ENCODE measurements at regions of chr2 and their contacts with region 1.

Region 1: DNA sequence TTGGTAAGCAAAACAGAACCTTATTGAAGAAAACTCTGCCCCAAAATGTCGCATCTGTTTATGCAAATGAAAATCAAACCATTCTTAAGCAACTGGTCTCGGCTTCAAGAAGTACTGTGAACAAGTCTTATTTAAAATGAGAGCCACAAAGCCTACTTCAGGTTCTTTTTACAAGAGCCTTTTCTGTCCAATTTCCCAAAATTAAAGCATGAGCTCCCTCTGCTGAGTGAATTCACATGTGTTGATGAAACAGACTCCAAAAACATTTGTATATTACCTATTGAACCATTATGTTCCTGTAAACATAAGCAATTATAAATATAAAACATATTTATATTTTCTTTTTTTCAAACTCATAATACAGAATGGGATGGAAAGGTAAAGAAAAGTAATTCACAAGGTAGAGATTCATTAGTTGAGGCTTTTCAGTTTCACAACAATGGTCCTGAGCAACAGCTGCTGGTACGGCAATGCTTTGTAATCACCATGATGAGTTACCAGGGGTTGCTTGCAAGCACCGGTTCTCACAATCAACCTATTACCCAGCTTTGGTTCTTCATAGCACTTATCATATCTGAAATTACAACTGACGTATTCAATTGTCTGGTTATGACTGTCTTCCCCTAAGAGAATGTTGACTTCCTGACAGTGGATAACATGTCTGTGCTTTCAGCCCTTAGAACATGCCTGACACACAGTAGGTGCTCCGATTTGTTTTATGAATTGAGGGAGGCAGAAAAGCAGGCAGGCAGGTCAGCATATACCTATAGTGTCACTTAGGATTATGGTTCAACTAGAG is 108.4 kb upstream of the BZW1 start:
- DNase-seq: peak; percentile 92
- ATAC-seq: peak; percentile 84
- H3K4me3 ChIP-seq: peak overlapping the region; percentile 33; the same call in 1 of the 2 replicates
- H3K27ac ChIP-seq: no peak overlapping the region
- H3K4me1 ChIP-seq: peaks cover 18% of the 10 kb centered on the region
- H3K27me3 ChIP-seq: no peaks in the 10 kb centered on the region
- CTCF ChIP-seq: peak; percentile 84

Region 2: GRCh38 chr2:199973703-199974102 is 729.6 kb before region 1 on chr2:
- CTCF ChIA-PET with region 1: no interaction called
- POLR2A ChIA-PET with region 1: no interaction called
- intact Hi-C with region 1: loop called (anchors 1 kb)
- DNase-seq: peak; percentile 50
- ATAC-seq: peak; percentile 39
- H3K4me3 ChIP-seq: no peak overlapping the region
- H3K27ac ChIP-seq: no peak overlapping the region
- H3K4me1 ChIP-seq: peaks cover 15% of the 10 kb centered on the region
- H3K27me3 ChIP-seq: no peaks in the 10 kb centered on the region
- CTCF ChIP-seq: peak; percentile 82

Region 3: DNA sequence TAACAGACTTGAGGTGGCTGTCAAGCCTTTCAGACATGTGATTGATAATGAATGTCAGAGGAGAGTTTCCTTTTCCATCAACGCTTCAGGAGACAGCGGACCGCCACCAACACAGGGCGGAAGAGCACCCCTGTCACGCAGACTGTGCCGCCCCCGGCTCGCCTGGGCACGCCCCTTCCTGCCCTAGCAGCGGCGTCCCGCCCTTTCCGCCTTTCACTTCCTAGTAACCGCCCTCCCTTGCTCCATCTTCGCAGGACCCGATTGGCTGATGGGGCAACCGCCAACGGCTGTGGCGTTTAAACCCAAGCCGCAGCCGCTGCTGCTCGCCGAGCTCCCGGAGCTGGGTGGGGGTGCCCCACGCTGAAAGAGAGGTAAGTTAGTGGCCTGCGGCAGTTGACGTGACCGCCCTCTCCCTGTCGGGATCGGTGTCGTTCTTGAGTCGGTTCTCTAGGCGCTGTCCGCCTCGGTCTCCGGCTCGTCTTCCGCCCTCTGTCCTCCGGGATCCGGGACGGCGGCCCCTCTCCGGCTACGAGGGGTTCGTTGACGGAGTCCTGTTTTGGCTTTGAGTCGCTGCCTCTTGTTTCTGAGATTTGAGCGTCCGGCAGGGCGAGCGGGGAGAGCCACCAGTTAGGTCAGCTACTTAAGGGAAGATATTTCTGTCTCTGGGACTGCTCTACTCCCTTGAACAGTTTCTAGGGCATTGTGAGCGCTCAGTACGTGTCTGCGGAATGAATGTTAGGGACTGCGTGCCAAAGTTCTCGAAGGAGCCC is 177.3 kb before region 1 on chr2 and contains the start of gene SGO2:
- CTCF ChIA-PET with region 1: no interaction called
- POLR2A ChIA-PET with region 1: no interaction called
- intact Hi-C with region 1: loop called (anchors 5 kb)
- DNase-seq: peak; percentile 98
- ATAC-seq: peak; percentile 90
- H3K4me3 ChIP-seq: peak within 1 kb of the TSS; percentile 92
- H3K27ac ChIP-seq: peak within 1 kb of the TSS; percentile 57
- H3K4me1 ChIP-seq: peaks cover 46% of the 10 kb centered on the region
- H3K27me3 ChIP-seq: no peaks in the 10 kb centered on the region
- CTCF ChIP-seq: no peak
- total RNA-seq, gene SGO2: 23.5 and 25.6 TPM in 2 replicates

Region 4: GRCh38 chr2:200578778-200579177 is 124.5 kb before region 1 on chr2:
- CTCF ChIA-PET with region 1: interaction called, 3 read pairs
- POLR2A ChIA-PET with region 1: no interaction called
- intact Hi-C with region 1: loop called (anchors 1 kb)
- DNase-seq: peak; percentile 67
- ATAC-seq: peak; percentile 73
- H3K4me3 ChIP-seq: no peak overlapping the region
- H3K27ac ChIP-seq: no peak overlapping the region
- H3K4me1 ChIP-seq: peaks cover 7% of the 10 kb centered on the region
- H3K27me3 ChIP-seq: no peaks in the 10 kb centered on the region
- CTCF ChIP-seq: peak; percentile 85

Region 5: GRCh38 chr2:200618587-200619021 is 84.7 kb before region 1 on chr2:
- CTCF ChIA-PET with region 1: interaction called, 4 read pairs
- POLR2A ChIA-PET with region 1: no interaction called
- intact Hi-C with region 1: loop called (anchors 1 kb)
- DNase-seq: peak; percentile 34
- ATAC-seq: peak; percentile 48
- H3K4me3 ChIP-seq: no peak overlapping the region
- H3K27ac ChIP-seq: no peak overlapping the region
- H3K4me1 ChIP-seq: peaks cover 36% of the 10 kb centered on the region
- H3K27me3 ChIP-seq: no peaks in the 10 kb centered on the region
- CTCF ChIP-seq: peak; percentile 47; the same call in 1 of the 2 replicates

Region 6: DNA sequence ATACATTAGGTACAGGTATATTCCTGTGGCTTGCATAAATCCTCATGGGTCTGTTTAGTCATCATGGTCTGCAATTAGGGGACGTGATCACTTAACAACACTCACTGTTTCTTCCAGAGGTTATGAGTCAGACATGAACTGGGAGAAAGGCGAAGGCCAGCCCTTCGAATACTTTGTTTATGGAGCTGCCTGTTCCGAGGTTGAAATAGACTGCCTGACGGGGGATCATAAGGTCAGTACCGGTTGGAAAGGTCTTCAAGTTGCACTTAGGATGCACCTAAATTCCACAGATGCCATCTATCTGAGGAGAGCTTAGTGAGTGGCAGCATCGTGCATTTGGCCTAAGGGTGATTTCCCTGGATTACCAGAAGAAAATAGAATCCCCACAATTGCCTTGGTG is 40.6 kb before region 1 on chr2:
- CTCF ChIA-PET with region 1: no interaction called
- POLR2A ChIA-PET with region 1: no interaction called
- intact Hi-C with region 1: loop called (anchors 2 kb)
- DNase-seq: peak; percentile 95
- ATAC-seq: peak; percentile 86
- H3K4me3 ChIP-seq: no peak overlapping the region
- H3K27ac ChIP-seq: peak overlapping the region; percentile 55
- H3K4me1 ChIP-seq: peaks cover 47% of the 10 kb centered on the region
- H3K27me3 ChIP-seq: no peaks in the 10 kb centered on the region
- CTCF ChIP-seq: no peak

Region 7: DNA sequence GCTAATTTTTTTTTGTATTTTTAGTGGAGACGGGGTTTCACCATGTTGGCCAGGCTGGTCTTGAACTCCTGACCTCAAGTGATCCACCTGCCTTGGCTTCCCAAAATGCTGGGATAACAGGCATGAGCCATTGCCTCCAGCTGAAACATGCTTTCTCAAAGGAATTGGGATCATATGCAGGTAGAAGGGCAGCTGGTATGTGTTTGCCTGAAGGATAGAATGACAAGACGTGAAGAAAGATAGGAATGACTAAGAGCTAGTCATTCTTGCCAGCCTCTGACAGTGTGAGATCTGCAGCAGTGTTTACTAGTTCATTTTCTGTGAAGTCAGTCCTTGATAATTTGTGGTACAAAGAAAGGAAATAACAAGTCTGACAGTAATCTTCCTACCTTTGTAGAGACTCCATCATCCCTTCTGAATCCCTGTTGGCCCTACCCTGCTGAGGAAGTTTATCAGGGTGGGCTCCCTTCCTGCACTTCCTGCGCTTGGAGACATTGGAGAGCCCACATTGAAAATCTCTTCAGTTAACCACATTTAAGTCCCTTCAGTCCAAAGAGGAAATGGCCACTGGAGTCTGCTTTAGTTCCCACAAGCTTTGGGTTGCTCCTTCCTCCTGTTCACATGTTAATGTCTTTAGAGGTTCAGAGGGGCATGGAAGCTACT is 427.3 kb after region 1 on chr2:
- CTCF ChIA-PET with region 1: no interaction called
- POLR2A ChIA-PET with region 1: no interaction called
- intact Hi-C with region 1: no loop called
- DNase-seq: peak; percentile 88
- ATAC-seq: peak; percentile 97
- H3K4me3 ChIP-seq: no peak overlapping the region
- H3K27ac ChIP-seq: peak overlapping the region; percentile 79
- H3K4me1 ChIP-seq: peaks cover 27% of the 10 kb centered on the region
- H3K27me3 ChIP-seq: no peaks in the 10 kb centered on the region
- CTCF ChIP-seq: no peak